Uterus (tissue), 4 donors: ENCODE measurements at regions of chr17 and their contacts with region 1.

Region 1: GRCh38 chr17:39621523-39622379 is 5.0 kb upstream of the PPP1R1B start:
- DNase-seq: peak; percentile 83 to 89
- H3K4me3 ChIP-seq: no peak overlapping the region
- H3K27ac ChIP-seq: no peak overlapping the region
- H3K4me1 ChIP-seq: peaks cover 0 to 4% of the 10 kb centered on the region in 2 donors
- H3K27me3 ChIP-seq: peaks cover 14 to 17% of the 10 kb centered on the region in 2 donors
- CTCF ChIP-seq: peak; percentile 98 to 100 (median 100)
- POLR2A ChIP-seq: no peak

Region 2: GRCh38 chr17:39261286-39261685 is 360.5 kb before region 1 on chr17:
- intact Hi-C with region 1: no loop called
- DNase-seq: no peak
- H3K4me3 ChIP-seq: no peak overlapping the region
- H3K27ac ChIP-seq: no peak overlapping the region
- H3K4me1 ChIP-seq: no peaks in the 10 kb centered on the region
- H3K27me3 ChIP-seq: no peaks in the 10 kb centered on the region
- CTCF ChIP-seq: no peak
- POLR2A ChIP-seq: no peak

Region 3: DNA sequence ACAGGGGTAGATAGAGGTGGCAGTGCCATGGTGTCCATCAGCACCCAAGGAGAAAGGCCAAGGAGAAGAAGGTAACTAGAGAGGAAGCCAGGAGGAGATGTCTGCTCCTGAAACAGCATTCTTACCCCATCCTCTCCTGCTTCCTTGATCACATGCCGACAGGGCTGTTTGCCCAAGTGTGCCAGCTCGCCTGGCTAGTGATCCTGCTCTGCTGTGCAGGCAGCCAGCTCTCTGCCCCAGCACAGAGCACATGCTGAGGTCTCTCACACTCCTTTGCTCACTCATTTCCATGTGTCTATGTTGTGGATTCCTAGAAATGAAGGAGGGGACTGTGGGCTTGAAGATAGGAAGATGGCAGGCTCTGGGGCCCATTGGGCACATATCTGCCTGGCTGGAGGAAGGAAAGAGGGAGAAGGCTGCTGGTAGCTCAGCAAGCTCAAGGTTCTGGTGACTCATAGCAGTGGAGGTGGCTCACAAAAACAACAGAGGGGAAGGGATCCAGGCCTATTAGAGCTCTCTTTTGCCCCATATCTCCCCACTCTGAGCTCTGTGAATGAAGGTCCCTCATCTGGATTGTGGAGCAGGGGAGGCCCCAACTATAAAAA is 68.3 kb before region 1 on chr17:
- intact Hi-C with region 1: loop called (anchors 10 kb)
- DNase-seq: no peak
- H3K4me3 ChIP-seq: no peak overlapping the region
- H3K27ac ChIP-seq: no peak overlapping the region
- H3K4me1 ChIP-seq: no peaks in the 10 kb centered on the region
- H3K27me3 ChIP-seq: no peaks in the 10 kb centered on the region
- CTCF ChIP-seq: no peak
- POLR2A ChIP-seq: no peak

Region 4: GRCh38 chr17:39754161-39754951 is 132.6 kb after region 1 on chr17:
- intact Hi-C with region 1: loop called (anchors 5 kb)
- DNase-seq: peak; percentile 84 to 89
- H3K4me3 ChIP-seq: peak overlapping the region; percentile 66 to 72
- H3K27ac ChIP-seq: peak overlapping the region; percentile 91 to 96
- H3K4me1 ChIP-seq: no peaks in the 10 kb centered on the region
- H3K27me3 ChIP-seq: no peaks in the 10 kb centered on the region
- CTCF ChIP-seq: peak; percentile 92 to 99 (median 96)
- POLR2A ChIP-seq: peak; percentile 52 to 67